ENCODE measurements at regions of chr13 and their contacts with region 1.

Region 1: DNA sequence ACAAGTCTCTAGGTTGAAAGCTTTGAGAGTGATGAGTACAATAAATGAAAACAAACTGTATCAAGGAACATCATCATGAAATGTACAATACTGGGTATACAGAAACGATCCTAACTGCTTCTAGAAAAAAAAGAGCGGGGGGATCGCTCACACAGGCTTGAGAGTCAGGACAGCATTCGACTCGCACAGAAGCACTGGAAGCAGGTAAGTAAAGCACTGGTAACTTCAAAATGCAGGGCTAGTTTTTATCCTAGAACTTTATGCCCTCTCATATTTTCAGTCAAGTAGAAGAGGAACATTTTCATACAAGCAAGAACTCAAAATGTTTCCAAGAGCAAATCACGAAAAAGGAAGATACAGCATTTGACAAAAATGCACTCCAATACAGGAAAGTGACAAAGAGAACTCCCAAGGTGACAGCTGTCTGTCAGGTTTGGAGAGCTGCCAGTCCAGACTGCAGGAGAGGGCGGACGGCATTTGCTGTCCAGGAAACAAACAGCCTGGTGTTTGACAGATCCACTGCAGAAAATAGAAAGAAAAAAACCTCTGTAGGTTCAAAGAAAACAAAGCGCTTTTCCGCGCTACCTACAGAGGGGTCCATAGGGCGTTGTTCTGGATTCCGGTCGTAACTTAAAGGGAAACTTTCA is 58.2 kb upstream of the XPO4 start:
- DNase-seq: no peak
- H3K4me3 ChIP-seq: no peak overlapping the region
- H3K27ac ChIP-seq: no peak overlapping the region
- H3K4me1 ChIP-seq: no peaks in the 10 kb centered on the region
- H3K27me3 ChIP-seq: no peaks in the 10 kb centered on the region
- CTCF ChIP-seq: no peak

Region 2: DNA sequence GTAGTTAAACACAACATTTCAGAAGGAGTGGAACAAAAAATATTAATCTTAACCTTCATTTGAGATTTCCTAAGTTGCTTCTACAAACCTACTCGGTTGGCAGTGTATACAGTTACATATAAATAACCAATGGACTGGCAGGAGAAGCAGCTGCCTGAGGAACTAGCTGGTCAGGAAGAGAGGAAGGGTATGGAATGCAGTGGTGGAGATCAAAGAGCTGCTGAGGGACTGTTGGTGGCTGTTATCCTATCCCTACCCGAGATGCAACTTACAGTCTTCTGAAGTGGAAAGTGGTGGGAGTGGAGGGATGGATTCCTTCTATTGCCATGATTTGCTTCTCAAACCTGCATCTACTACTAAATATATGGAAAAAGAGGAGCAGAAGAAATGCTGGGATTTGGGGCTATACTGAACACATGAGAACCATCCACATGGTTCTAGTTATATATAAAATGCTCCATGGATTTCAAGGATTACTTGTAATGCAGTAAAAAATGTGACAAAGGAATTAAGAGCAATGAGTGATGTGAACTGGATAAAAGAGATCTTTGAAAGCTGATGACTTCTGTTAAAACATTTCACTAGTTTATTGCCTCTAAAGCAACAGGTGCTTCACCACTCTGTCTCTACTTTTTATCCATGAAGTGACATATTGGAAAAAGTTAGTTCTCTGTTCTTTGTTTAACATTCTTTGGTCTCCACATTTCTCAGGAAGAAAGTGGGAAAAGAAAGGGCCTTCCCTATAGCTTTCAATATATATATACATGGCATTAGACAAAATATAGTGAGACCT is 613.3 kb after region 1 on chr13:
- intact Hi-C with region 1: loop called (anchors 5 kb)
- DNase-seq: no peak
- H3K4me3 ChIP-seq: no peak overlapping the region
- H3K27ac ChIP-seq: no peak overlapping the region
- H3K4me1 ChIP-seq: no peaks in the 10 kb centered on the region
- H3K27me3 ChIP-seq: no peaks in the 10 kb centered on the region
- CTCF ChIP-seq: no peak